Activated T-helper 2 cell treated with anti-CD3 and anti-CD28 coated beads, Interferon-gamma antibody, Interleukin-2, Interleukin-4, amounts not matched to agents 10 μg/mL and 5 μg/mL and 100 μg/mL, durations not matched to agents 14 hours and 24 hours and 36 hours (primary cell): ENCODE measurements at regions of chr5 and their contacts with region 1.

Region 1: GRCh38 chr5:131252824-131253171 is 11.1 kb upstream of the CDC42SE2 start:
- DNase-seq: peak; percentile 79
- H3K4me3 Mint-ChIP-seq: peak overlapping the region; percentile 90
- H3K27ac Mint-ChIP-seq: peak overlapping the region; percentile 99
- H3K4me1 Mint-ChIP-seq: peaks cover 59% of the 10 kb centered on the region
- H3K27me3 Mint-ChIP-seq: no peaks in the 10 kb centered on the region

Region 2: DNA sequence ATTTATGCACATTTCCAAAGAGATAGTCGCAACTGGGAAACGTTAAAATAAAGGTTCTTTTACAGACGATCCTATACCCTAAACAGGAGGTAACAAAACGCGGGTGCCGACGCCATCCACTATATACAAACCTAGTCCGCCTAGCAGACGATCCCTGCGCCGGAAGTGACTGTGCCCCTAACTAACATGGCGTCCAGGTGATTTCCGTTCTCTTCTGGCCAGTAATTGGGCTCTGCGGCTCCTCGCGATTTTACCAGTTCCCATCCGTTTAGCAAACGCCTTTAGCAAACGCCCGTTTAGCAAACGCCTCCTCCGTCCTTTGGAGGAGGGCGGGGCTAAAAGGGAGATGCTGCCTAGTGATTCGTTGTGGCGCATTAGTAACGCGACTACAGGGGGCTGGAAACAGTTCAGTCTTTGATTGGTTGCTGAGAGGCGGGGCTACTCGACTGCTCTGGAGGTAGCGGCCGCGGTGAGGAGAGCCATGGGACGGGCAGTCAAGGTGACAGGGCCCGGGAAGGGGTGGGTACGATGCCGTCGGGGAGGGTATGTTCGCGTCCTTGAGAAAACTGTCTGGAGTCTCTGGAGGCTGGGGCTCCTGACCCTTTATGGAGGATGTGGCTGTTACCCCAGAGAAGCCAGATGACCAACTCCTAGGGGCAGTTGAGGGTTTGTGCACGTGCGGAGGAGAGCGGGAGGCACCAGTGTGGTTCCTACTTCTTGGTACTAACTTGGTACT is 82.1 kb before region 1 on chr5 and contains the start of gene LYRM7:
- intact Hi-C with region 1: loop called (anchors 1 kb)
- DNase-seq: peak; percentile 97
- H3K4me3 Mint-ChIP-seq: peak within 1 kb of the TSS; percentile 99
- H3K27ac Mint-ChIP-seq: peak within 1 kb of the TSS; percentile 95
- H3K4me1 Mint-ChIP-seq: peaks cover 34% of the 10 kb centered on the region
- H3K27me3 Mint-ChIP-seq: no peaks in the 10 kb centered on the region
- total RNA-seq, gene LYRM7: 14.0 and 20.3 TPM in 2 replicates

Region 3: GRCh38 chr5:131224387-131225201 is 28.2 kb before region 1 on chr5:
- intact Hi-C with region 1: loop called (anchors 2 kb)
- DNase-seq: no peak
- H3K4me3 Mint-ChIP-seq: no peak overlapping the region
- H3K27ac Mint-ChIP-seq: no peak overlapping the region
- H3K4me1 Mint-ChIP-seq: peaks cover 13% of the 10 kb centered on the region
- H3K27me3 Mint-ChIP-seq: no peaks in the 10 kb centered on the region

Region 4: GRCh38 chr5:131263648-131264450 is 11.1 kb after region 1 on chr5 and contains the start of gene CDC42SE2:
- intact Hi-C with region 1: loop called (anchors 1 kb)
- DNase-seq: peak; percentile 85
- H3K4me3 Mint-ChIP-seq: peak within 1 kb of the TSS; percentile 83
- H3K27ac Mint-ChIP-seq: peak within 1 kb of the TSS; percentile 90
- H3K4me1 Mint-ChIP-seq: peaks cover 38% of the 10 kb centered on the region
- H3K27me3 Mint-ChIP-seq: no peaks in the 10 kb centered on the region
- total RNA-seq, gene CDC42SE2: 89.5 and 91.0 TPM in 2 replicates

Region 5: DNA sequence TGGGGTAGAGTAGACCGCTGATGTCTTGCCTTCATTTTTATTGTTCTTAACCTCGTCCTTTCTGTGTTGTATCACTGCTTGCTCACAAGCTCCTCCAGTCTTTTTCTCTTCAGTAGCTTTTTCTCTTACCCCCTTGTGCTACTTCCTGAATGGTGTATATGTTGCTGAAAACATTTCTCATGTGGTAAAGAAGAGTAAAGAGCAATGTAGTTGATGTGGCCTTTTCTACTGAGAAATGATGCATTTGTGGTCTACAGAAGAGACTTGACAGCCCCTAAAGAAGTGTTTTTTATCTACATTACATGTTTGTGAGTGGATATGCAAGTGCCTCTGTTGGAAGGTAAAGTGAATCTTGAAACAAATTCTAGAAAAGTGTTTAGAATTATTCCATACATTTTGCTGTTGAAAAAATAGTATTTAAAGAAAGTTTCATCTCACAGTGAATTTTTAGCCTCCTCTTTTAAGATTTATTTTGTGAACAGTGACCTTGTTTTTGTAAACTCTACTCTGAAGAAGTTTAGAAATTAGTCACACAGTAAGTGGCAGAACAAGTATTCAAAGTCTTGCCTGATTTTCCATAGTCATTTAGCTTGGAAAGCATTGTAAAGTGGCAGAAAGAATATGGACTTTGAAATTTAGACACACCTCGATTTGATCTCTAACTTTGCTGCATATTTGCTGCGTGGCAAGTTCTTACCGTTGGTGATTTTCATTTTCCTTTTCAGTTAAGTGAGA is 28.5 kb after region 1 on chr5:
- intact Hi-C with region 1: loop called (anchors 2 kb)
- DNase-seq: no peak
- H3K4me3 Mint-ChIP-seq: peak overlapping the region; percentile 82
- H3K27ac Mint-ChIP-seq: peak overlapping the region; percentile 96
- H3K4me1 Mint-ChIP-seq: peaks cover 78% of the 10 kb centered on the region
- H3K27me3 Mint-ChIP-seq: no peaks in the 10 kb centered on the region

Region 6: DNA sequence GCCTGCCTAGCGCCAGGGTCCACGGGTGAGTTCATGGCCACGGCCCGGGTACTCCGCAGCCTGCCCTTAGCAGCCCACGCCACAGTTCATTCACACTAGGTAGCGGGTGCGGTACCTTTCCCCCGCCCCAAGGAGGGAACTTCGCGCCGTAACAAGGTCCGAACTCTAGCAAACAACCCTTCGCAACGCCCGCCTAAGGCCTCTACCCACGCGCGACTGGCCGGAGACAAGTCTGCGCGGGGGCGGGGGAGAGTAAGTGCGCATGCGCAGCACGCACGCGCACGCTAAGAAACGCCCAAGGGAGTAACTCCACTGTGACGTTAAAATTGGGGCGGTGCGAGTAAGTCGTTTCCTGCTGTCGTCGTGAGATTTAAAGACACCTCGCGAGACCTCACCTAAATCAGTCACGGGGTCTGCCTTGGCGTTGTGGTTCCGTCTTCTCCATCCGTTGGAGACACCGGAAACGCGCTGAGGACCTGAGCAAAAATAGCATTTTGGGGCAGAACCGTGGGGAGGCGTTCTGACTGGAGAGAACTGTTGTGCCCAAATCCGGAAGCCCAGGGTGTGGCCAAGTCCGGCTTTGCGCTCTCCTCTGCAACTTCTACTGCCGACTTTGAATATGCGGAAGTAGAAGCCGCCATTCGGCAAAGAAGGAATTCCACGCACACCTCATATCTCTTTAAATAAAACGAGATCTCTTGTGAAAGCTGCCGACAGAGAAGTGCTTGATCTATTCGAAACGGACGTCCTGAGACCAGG is 382.4 kb after region 1 on chr5 and contains the start of gene RAPGEF6:
- intact Hi-C with region 1: loop called (anchors 10 kb)
- DNase-seq: peak; percentile 98
- H3K4me3 Mint-ChIP-seq: peak within 1 kb of the TSS; percentile 95
- H3K27ac Mint-ChIP-seq: peak within 1 kb of the TSS; percentile 97
- H3K4me1 Mint-ChIP-seq: peaks cover 30% of the 10 kb centered on the region
- H3K27me3 Mint-ChIP-seq: no peaks in the 10 kb centered on the region
- total RNA-seq, gene RAPGEF6: 31.0 and 33.9 TPM in 2 replicates